Endothelial cell of umbilical vein (primary cell): ENCODE measurements at regions of chr4 and their contacts with region 1.

Region 1: DNA sequence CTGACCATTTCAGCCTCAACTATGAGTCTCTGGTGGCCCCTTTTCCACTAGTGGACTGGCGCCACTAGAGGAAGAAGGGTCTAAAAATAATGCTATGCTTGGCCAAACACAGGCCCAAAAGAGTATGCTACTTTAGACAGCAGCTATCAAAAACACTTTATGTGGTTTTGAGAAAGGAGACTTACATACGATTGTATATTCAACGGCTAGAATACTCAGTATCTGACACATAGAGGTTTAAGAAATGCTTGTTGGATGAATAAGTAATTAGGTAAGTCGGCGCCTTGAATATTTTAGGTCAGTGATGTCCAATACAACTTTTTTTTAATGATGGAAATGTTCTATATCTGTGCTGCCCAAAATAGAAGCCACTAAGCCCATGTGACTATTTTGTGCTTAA is 25.7 kb upstream of the TMPRSS11A start:
- DNase-seq: no peak
- H3K4me3 ChIP-seq: no peak overlapping the region
- H3K27ac ChIP-seq: no peak overlapping the region
- H3K4me1 ChIP-seq: no peaks in the 10 kb centered on the region
- H3K27me3 ChIP-seq: no peaks in the 10 kb centered on the region
- CTCF ChIP-seq: no peak
- POLR2A ChIP-seq: no peak

Region 2: DNA sequence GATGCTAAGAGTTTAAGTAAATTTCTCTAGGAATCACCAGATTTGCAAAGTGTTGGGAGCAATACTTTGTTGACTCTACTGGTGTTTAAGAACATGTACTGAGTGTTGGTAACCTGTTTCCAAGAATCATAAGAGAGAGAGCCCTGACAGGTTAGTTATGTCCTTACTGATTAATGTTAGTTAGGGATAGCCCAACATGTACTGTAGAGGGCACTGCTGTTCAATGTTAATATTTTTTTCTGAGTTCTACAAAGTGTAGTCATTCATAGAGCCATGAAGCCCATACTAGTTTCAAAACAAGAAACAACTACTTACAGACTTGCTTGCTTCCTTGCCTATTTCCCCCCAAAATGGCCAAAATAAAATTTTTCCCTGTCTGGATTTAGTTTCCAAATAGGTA is 117.1 kb before region 1 on chr4:
- CTCF ChIA-PET with region 1: no interaction called
- POLR2A ChIA-PET with region 1: no interaction called
- dilution Hi-C with region 1: no loop called
- intact Hi-C with region 1: loop called (anchors 5 kb)
- DNase-seq: peak; percentile 74
- H3K4me3 ChIP-seq: no peak overlapping the region
- H3K27ac ChIP-seq: no peak overlapping the region
- H3K4me1 ChIP-seq: no peaks in the 10 kb centered on the region
- H3K27me3 ChIP-seq: no peaks in the 10 kb centered on the region
- CTCF ChIP-seq: peak; percentile 28 to 41
- POLR2A ChIP-seq: no peak

Region 3: GRCh38 chr4:68748181-68748991 is 759.4 kb after region 1 on chr4:
- CTCF ChIA-PET with region 1: no interaction called
- POLR2A ChIA-PET with region 1: no interaction called
- dilution Hi-C with region 1: no loop called
- intact Hi-C with region 1: no loop called
- DNase-seq: peak; percentile 17
- H3K4me3 ChIP-seq: no peak overlapping the region
- H3K27ac ChIP-seq: no peak overlapping the region
- H3K4me1 ChIP-seq: no peaks in the 10 kb centered on the region
- H3K27me3 ChIP-seq: no peaks in the 10 kb centered on the region
- CTCF ChIP-seq: no peak
- POLR2A ChIP-seq: no peak